Heart right ventricle (tissue), 16 donors: ENCODE measurements at regions of chr2 and their contacts with region 1.

Region 1: GRCh38 chr2:196601430-196602306 is 37.8 kb upstream of the CCDC150 start:
- DNase-seq: peak; percentile 37 to 81
- ATAC-seq: peak; percentile 82 to 99 (median 98)
- H3K4me3 ChIP-seq: no peak overlapping the region
- H3K27ac ChIP-seq: peak overlapping the region in 6 of 10 donors; percentile 19 to 77 (median 69)
- H3K4me1 ChIP-seq: peaks cover 0 to 13% (median 0%) of the 10 kb centered on the region in 9 donors
- H3K27me3 ChIP-seq: peaks cover 0 to 6% (median 0%) of the 10 kb centered on the region in 7 donors
- CTCF ChIP-seq: peak in 2 of 9 donors; percentile 20 to 22

Region 2: DNA sequence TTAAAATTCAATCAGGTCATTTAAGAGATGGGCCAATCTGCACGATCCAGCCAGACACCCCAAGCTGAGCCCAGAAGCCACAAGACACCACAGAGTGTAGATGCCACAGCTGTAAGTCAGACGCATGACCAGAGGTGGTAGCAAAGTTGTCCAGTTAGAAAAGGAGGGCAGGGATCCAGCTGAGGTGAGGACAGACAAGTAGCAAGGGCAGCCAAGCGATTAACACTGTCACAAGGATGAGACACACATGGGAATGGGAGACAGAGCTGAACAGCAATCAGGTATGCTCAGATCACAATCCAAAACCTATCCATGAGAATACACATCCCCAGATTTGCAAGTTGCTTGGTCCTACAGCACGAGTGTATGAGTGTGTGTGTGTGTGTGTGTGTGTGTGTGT is 286.9 kb before region 1 on chr2:
- intact Hi-C with region 1: loop called in 2 of 10 experiments (anchors 10 kb)
- DNase-seq: peak in 1 of 2 donors; percentile 65
- ATAC-seq: peak; percentile 39 to 88 (median 76)
- H3K4me3 ChIP-seq: no peak overlapping the region
- H3K27ac ChIP-seq: peak overlapping the region in 1 of 10 donors; percentile 58
- H3K4me1 ChIP-seq: peaks cover 0 to 41% (median 3%) of the 10 kb centered on the region in 9 donors
- H3K27me3 ChIP-seq: no peaks in the 10 kb centered on the region
- CTCF ChIP-seq: peak in 3 of 9 donors; percentile 15 to 27 (median 20)